ENCODE measurements at regions of chr2 and their contacts with region 1.

Region 1: GRCh38 chr2:16756831-16757644 is 91.4 kb upstream of the CYRIA start:
- DNase-seq: peak; percentile 71 to 80 (median 73)
- H3K4me3 ChIP-seq: no peak overlapping the region
- H3K4me3 Mint-ChIP-seq: peak overlapping the region in 1 of 2 donors; percentile 54
- H3K27ac ChIP-seq: no peak overlapping the region
- H3K27ac Mint-ChIP-seq: peak overlapping the region in 4 of 7 donors; percentile 26 to 64 (median 54)
- H3K4me1 ChIP-seq: peaks cover 30 to 35% of the 10 kb centered on the region in 2 donors
- H3K4me1 Mint-ChIP-seq: peaks cover 33% of the 10 kb centered on the region
- H3K27me3 ChIP-seq: no peaks in the 10 kb centered on the region
- H3K27me3 Mint-ChIP-seq: no peaks in the 10 kb centered on the region
- CTCF ChIP-seq: peak; percentile 93

Region 2: DNA sequence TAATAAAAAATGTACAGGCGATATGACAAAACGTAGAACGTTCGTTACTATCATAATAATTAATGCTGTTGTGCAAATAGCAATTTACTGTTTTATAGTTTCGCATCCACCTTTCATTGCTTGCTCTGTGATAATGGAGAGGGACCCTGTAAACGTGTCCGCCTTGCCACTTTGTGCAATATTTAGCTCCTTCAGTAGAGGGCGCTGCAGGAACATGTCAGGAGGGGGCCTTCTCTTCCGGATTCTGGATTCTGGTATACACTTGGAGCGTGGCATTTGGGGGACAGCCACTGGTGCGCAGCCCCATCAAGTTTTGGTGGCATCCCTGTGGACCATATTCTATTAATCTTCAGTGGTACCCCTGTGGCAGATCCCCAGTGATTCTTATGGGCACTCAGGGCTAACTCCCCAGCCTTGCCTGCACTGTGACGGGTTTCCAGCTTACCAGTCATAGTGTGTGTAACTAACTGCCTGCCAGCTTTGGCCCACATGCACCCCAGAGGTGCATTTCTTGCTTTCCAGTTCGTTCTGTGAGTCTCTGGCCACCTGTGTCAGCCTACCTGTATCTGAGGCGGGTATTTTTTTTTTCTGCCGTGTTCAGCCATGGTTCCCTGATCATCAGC is 231.7 kb before region 1 on chr2:
- intact Hi-C with region 1: loop called in 1 of 2 experiments (anchors 5 kb)
- DNase-seq: peak; percentile 21 to 43 (median 34)
- H3K4me3 ChIP-seq: no peak overlapping the region
- H3K4me3 Mint-ChIP-seq: no peak overlapping the region
- H3K27ac ChIP-seq: no peak overlapping the region
- H3K27ac Mint-ChIP-seq: no peak overlapping the region
- H3K4me1 ChIP-seq: no peaks in the 10 kb centered on the region
- H3K4me1 Mint-ChIP-seq: no peaks in the 10 kb centered on the region
- H3K27me3 ChIP-seq: no peaks in the 10 kb centered on the region
- H3K27me3 Mint-ChIP-seq: peaks cover 2 to 8% (median 6%) of the 10 kb centered on the region in 3 donors
- CTCF ChIP-seq: peak; percentile 95

Region 3: DNA sequence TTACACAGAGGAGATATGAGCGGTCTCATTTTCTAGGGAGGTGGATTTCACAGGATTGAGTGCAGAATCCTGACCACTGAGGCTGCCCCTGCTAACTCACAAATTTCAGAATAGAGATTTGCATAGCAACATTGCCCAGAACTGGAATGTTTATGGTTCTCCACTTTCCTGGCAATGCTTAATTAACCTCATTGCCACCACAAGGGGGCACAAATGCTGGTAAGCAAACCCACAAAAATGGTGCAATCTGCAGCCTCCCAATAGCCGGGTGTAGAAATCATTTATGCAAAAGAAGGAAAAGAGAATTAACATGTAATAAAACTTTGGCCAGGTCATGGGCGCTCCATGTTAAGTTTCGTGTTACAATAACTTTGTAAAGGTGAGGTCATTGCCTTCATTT is 203.8 kb before region 1 on chr2:
- intact Hi-C with region 1: loop called (anchors 5 to 10 kb)
- DNase-seq: peak; percentile 27 to 59 (median 56)
- H3K4me3 ChIP-seq: no peak overlapping the region
- H3K4me3 Mint-ChIP-seq: no peak overlapping the region
- H3K27ac ChIP-seq: no peak overlapping the region
- H3K27ac Mint-ChIP-seq: no peak overlapping the region
- H3K4me1 ChIP-seq: no peaks in the 10 kb centered on the region
- H3K4me1 Mint-ChIP-seq: peaks cover 2% of the 10 kb centered on the region
- H3K27me3 ChIP-seq: no peaks in the 10 kb centered on the region
- H3K27me3 Mint-ChIP-seq: no peaks in the 10 kb centered on the region
- CTCF ChIP-seq: peak; percentile 78

Region 4: GRCh38 chr2:16608661-16609643 is 148.1 kb before region 1 on chr2:
- intact Hi-C with region 1: loop called (anchors 5 kb)
- DNase-seq: peak; percentile 71 to 81 (median 78)
- H3K4me3 ChIP-seq: peak overlapping the region; percentile 18 to 72 (median 32)
- H3K4me3 Mint-ChIP-seq: peak overlapping the region; percentile 67 to 87
- H3K27ac ChIP-seq: peak overlapping the region in 1 of 2 donors; percentile 66
- H3K27ac Mint-ChIP-seq: peak overlapping the region; percentile 81 to 91 (median 84)
- H3K4me1 ChIP-seq: peaks cover 9 to 21% of the 10 kb centered on the region in 2 donors
- H3K4me1 Mint-ChIP-seq: peaks cover 35% of the 10 kb centered on the region
- H3K27me3 ChIP-seq: no peaks in the 10 kb centered on the region
- H3K27me3 Mint-ChIP-seq: peaks cover 0 to 4% (median 0%) of the 10 kb centered on the region in 3 donors
- CTCF ChIP-seq: peak; percentile 99

Region 5: DNA sequence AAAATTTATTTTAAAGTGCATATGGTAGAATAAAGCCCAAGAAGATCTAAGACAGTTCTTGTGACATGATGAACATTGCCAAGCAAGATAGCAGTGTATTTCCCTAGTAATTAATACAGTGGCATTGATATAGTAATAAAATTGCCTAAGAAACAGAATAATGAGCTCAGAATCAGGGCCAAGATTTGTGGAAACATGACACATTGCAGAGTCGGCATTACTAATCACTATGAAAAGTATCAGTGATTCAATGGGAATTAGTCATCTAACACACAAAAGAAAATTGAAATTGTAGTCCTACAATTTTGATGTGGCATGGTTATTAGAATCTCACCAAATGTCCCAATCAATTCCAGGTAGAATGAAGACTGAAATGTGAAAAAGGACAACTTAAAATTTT is 151.6 kb after region 1 on chr2:
- intact Hi-C with region 1: no loop called
- DNase-seq: peak in 1 of 3 donors; percentile 7
- H3K4me3 ChIP-seq: no peak overlapping the region
- H3K4me3 Mint-ChIP-seq: no peak overlapping the region
- H3K27ac ChIP-seq: no peak overlapping the region
- H3K27ac Mint-ChIP-seq: no peak overlapping the region
- H3K4me1 ChIP-seq: no peaks in the 10 kb centered on the region
- H3K4me1 Mint-ChIP-seq: no peaks in the 10 kb centered on the region
- H3K27me3 ChIP-seq: no peaks in the 10 kb centered on the region
- H3K27me3 Mint-ChIP-seq: peaks cover 0 to 2% (median 1%) of the 10 kb centered on the region in 3 donors
- CTCF ChIP-seq: no peak